ENCODE measurements at regions of chr17 and their contacts with region 1.

Region 1: DNA sequence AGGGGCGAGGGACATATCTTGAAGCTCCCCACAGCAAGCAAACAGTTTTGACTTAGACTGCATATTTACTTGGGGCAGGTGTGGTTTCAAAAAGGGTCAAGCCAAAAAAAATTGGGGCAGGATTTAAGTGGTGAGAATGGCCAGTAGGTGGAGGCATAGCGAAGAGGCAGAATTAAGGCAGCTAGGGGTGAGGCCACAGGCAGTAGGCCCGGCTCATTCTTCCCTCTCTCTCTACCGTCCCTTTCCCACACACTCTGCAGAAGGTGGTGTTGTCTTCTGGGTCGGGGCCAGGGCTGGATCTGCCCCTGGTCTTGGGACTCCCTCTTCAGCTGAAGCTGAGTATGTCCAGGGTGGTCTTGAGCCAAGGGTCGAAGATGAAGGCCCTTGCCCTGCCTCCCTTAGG is 2.6 kb downstream of the SHBG start:
- DNase-seq: peak; percentile 54
- ATAC-seq: peak; percentile 35
- H3K4me3 ChIP-seq: no peak overlapping the region
- H3K27ac ChIP-seq: no peak overlapping the region
- H3K4me1 ChIP-seq: 0 out of 2 replicates have a peak, but pooled peaks cover 1% of the 10 kb centered on the region
- H3K27me3 ChIP-seq: peaks cover 4% of the 10 kb centered on the region; the same call in 1 of the 2 replicates
- CTCF ChIP-seq: peak; percentile 64
- POLR2A ChIP-seq: no peak
- RAD21 ChIP-seq: peak; percentile 56

Region 2: DNA sequence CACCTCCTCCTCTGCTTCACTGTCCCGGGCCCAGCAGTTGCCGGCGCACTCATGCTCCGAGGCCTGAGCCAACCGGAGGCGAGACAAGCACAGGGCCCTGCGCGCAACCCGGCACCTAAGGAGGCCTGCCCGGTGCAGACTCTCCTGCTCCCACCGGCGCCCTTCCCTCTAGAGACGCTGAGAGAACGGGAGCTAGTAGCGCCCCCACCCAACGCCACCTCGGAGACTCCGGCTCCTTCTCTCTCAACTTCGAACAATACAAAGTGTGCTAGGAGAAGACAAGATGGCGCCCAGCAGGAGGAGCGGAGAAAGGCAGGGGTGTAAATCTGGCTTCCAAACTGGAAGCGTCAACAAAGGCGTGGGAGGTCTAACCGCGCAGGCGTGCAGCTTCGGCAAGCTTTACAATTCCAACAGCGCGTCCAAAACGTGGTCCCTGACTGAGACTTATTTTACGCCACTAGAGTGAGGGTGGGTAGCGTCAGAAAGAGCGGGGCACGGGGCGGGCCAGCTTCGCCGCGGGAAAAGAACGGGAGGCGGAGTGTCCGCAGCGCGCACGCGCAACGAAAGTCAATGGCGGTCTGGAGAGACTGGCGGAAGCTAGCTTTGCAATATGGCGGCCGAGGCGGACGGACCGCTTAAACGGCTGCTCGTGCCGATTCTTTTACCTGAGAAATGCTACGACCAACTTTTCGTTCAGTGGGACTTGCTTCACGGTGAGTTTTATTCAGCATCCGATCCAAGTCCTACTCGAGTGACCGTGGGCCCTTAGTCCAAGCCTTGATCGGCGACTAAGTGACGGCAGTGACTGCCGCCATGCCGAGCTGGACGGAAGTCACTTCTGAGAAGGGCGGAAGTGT is 49.0 kb before region 1 on chr17 and contains the start of gene MPDU1:
- CTCF ChIA-PET with region 1: no interaction called
- POLR2A ChIA-PET with region 1: no interaction called
- dilution Hi-C with region 1: no loop called
- in situ Hi-C with region 1: no loop called
- intact Hi-C with region 1: no loop called
- DNase-seq: peak; percentile 96
- ATAC-seq: peak; percentile 70
- H3K4me3 ChIP-seq: peak within 1 kb of the TSS; percentile 68
- H3K27ac ChIP-seq: peak within 1 kb of the TSS; percentile 93
- H3K4me1 ChIP-seq: peaks cover 43% of the 10 kb centered on the region
- H3K27me3 ChIP-seq: no peaks in the 10 kb centered on the region
- CTCF ChIP-seq: no peak
- POLR2A ChIP-seq: peak; percentile 98
- RAD21 ChIP-seq: no peak
- total RNA-seq, gene MPDU1: 142 and 149 TPM in 2 replicates

Region 3: GRCh38 chr17:7606280-7606679 is 26.2 kb before region 1 on chr17:
- CTCF ChIA-PET with region 1: interaction called, 5 read pairs
- POLR2A ChIA-PET with region 1: interaction called, 11 read pairs
- dilution Hi-C with region 1: no loop called
- in situ Hi-C with region 1: no loop called
- intact Hi-C with region 1: no loop called
- DNase-seq: no peak
- ATAC-seq: no peak
- H3K4me3 ChIP-seq: no peak overlapping the region
- H3K27ac ChIP-seq: no peak overlapping the region
- H3K4me1 ChIP-seq: peaks cover 2% of the 10 kb centered on the region; the same call in 1 of the 2 replicates
- H3K27me3 ChIP-seq: no peaks in the 10 kb centered on the region
- CTCF ChIP-seq: no peak
- POLR2A ChIP-seq: no peak
- RAD21 ChIP-seq: no peak

Region 4: GRCh38 chr17:7716901-7717755 is 84.6 kb after region 1 on chr17 and contains the start of gene DNAH2:
- CTCF ChIA-PET with region 1: no interaction called
- POLR2A ChIA-PET with region 1: no interaction called
- dilution Hi-C with region 1: no loop called
- in situ Hi-C with region 1: no loop called
- intact Hi-C with region 1: loop called (anchors 1 kb)
- DNase-seq: peak; percentile 90
- ATAC-seq: peak; percentile 92
- H3K4me3 ChIP-seq: peak within 1 kb of the TSS; percentile 73
- H3K27ac ChIP-seq: peak within 1 kb of the TSS; percentile 65; the same call in 1 of the 2 replicates
- H3K4me1 ChIP-seq: peaks cover 5% of the 10 kb centered on the region; the same call in 1 of the 2 replicates
- H3K27me3 ChIP-seq: peaks cover 69% of the 10 kb centered on the region
- CTCF ChIP-seq: peak; percentile 57
- POLR2A ChIP-seq: no peak
- RAD21 ChIP-seq: peak; percentile 58
- total RNA-seq, gene DNAH2: under 0.01 TPM in 2 replicates